ENCODE measurements at regions of chr16 and their contacts with region 1.

Region 1: DNA sequence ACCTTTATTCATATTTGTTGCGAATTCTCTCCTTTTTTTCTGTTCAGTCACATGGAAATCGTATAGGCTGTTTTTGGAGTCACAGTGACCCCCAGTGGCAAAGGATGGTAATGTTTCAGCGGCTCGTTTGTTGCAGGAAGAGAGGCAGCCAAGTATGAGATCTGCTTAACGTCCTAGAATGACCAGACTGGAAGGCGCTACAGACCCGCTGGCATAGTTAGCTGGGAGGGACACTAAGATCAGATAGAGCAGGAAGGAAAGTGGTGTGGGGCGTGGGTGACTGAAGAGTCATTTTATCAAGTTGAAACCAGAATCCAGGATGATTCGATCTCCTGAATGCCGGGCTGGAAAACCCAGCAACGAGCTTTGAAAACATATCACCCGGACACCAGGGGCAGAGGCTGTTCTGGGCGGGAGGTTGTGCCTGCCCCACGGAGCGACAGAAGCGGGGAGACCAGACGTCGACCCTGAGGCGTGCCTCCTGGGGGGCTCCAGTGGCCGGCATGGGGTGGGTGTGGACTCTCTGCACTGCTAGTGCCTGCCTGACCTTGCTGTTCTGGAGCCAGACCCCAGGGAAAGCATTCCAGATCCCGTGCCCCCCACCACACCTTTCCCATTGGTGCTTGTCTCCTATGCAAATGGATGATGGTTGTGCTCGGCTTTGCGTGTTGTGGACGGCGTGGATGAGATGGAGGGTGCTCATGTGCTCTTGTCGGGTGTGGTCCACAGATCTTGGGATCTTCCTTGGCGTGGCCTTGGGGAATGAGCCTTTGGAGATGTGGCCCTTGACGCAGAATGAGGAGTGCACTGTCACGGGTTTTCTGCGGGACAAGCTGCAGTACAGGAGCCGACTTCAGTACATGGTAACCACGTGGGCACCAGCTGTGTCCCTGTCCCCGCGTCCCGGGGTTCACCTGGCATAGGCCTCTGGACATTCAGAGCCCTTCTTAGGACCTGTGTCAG is 7.7 kb downstream of the IL34 start:
- DNase-seq: peak; percentile 95
- H3K4me3 Mint-ChIP-seq: peak overlapping the region; percentile 59
- H3K27ac Mint-ChIP-seq: no peak overlapping the region
- H3K4me1 Mint-ChIP-seq: peaks cover 6% of the 10 kb centered on the region
- H3K27me3 Mint-ChIP-seq: no peaks in the 10 kb centered on the region

Region 2: GRCh38 chr16:70372921-70373728 is 281.0 kb before region 1 on chr16:
- intact Hi-C with region 1: loop called (anchors 1 kb)
- DNase-seq: no peak
- H3K4me3 Mint-ChIP-seq: no peak overlapping the region
- H3K27ac Mint-ChIP-seq: no peak overlapping the region
- H3K4me1 Mint-ChIP-seq: peaks cover 11% of the 10 kb centered on the region
- H3K27me3 Mint-ChIP-seq: no peaks in the 10 kb centered on the region

Region 3: DNA sequence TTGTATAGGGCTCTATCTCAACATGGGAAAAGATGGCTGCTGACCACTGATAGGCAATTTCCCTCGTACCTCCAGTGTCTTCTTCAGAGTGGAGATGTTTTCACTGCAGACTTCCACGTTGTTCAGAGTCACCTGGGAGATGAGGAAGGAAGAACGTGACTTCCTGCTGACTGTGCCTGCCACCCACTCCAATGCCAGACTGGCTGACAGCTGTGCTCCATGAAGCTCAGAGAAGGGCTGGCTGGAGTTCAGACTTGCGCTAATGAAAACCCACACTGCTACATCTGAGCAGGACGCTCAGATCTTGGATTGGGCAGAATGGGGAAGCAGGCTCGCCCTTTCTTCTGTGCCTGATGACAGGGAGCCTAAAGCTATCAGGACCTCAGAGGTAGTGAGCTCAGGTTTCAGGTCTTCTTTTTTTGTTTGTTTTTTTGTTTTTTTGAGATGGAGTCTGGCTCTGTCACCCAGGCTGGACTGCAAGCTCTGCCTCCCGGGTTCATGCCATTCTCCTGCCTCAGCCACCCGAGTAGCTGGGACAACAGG is 163.8 kb before region 1 on chr16:
- intact Hi-C with region 1: loop called (anchors 10 kb)
- DNase-seq: no peak
- H3K4me3 Mint-ChIP-seq: no peak overlapping the region
- H3K27ac Mint-ChIP-seq: no peak overlapping the region
- H3K4me1 Mint-ChIP-seq: peaks cover 14% of the 10 kb centered on the region
- H3K27me3 Mint-ChIP-seq: no peaks in the 10 kb centered on the region

Region 4: DNA sequence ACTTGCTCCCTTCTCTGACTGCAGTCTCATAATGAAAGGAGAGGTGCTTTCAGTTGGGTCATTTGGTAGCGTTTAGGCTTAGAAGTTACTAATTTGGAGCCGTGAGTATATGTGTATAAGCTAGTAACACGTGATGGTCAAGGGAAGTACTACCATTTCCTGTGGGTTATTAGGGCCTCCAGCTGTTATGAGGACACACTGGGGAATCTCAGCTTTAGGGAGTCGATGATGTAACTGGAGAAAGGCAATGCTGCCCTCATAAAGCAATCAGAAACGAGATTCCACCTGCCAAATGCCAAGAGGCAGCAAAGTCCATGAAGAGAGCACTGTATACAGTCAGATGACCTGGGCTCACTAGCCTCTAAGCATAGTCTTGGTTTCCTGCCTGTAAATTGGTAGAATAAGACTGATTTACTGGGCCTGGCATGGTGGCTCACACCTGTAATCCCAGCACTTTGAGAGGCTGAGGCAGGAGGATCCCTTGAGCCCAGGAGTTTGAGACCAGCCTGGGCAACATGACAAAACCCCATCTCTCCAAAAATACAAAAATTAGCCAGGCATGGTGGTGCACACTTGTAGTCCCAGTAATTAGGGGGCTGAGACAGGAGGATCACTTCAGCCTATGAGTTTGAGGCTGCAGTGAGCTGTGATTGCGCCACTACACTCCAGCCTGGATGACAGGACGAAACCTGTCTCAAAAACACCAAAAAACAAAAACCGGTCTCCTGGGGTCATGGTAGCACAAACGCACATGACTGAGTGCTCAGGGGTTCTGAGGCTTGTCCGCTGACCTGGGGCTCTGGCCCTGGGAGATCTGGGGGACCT is 77.4 kb before region 1 on chr16:
- intact Hi-C with region 1: loop called (anchors 5 kb)
- DNase-seq: no peak
- H3K4me3 Mint-ChIP-seq: no peak overlapping the region
- H3K27ac Mint-ChIP-seq: peak overlapping the region; percentile 7
- H3K4me1 Mint-ChIP-seq: peaks cover 2% of the 10 kb centered on the region
- H3K27me3 Mint-ChIP-seq: no peaks in the 10 kb centered on the region

Region 5: GRCh38 chr16:70770626-70771552 is 116.8 kb after region 1 on chr16:
- intact Hi-C with region 1: loop called (anchors 1 kb)
- DNase-seq: peak; percentile 91
- H3K4me3 Mint-ChIP-seq: no peak overlapping the region
- H3K27ac Mint-ChIP-seq: no peak overlapping the region
- H3K4me1 Mint-ChIP-seq: peaks cover 2% of the 10 kb centered on the region
- H3K27me3 Mint-ChIP-seq: no peaks in the 10 kb centered on the region

Measured in activated CD4-positive, alpha-beta T cell treated with anti-CD3 and anti-CD28 coated beads, Interleukin-2, amount 10 ng/mL, durations not matched to agents 24 days and 14 days (primary cell).